ENCODE measurements at regions of chr12 and their contacts with region 1.

Region 1: GRCh38 chr12:107027636-107028053 is 40.7 kb upstream of the MTERF2 start:
- DNase-seq: peak; percentile 12 to 99
- H3K4me3 ChIP-seq: no peak overlapping the region
- H3K27ac ChIP-seq: peak overlapping the region; percentile 69
- H3K4me1 ChIP-seq: peaks cover 51% of the 10 kb centered on the region
- H3K27me3 ChIP-seq: no peaks in the 10 kb centered on the region
- CTCF ChIP-seq: no peak

Region 2: GRCh38 chr12:106841510-106842302 is 185.9 kb before region 1 on chr12:
- CTCF ChIA-PET with region 1: no interaction called
- POLR2A ChIA-PET with region 1: no interaction called
- intact Hi-C with region 1: no loop called
- DNase-seq: peak in 1 of 2 experiments; percentile 14
- H3K4me3 ChIP-seq: no peak overlapping the region
- H3K27ac ChIP-seq: no peak overlapping the region
- H3K4me1 ChIP-seq: peaks cover 16% of the 10 kb centered on the region
- H3K27me3 ChIP-seq: no peaks in the 10 kb centered on the region
- CTCF ChIP-seq: peak; percentile 78

Region 3: GRCh38 chr12:107053709-107054108 is 26.1 kb after region 1 on chr12:
- CTCF ChIA-PET with region 1: no interaction called
- POLR2A ChIA-PET with region 1: no interaction called
- intact Hi-C with region 1: no loop called
- DNase-seq: no peak
- H3K4me3 ChIP-seq: no peak overlapping the region
- H3K27ac ChIP-seq: no peak overlapping the region
- H3K4me1 ChIP-seq: peaks cover 14% of the 10 kb centered on the region
- H3K27me3 ChIP-seq: no peaks in the 10 kb centered on the region
- CTCF ChIP-seq: no peak

Region 4: DNA sequence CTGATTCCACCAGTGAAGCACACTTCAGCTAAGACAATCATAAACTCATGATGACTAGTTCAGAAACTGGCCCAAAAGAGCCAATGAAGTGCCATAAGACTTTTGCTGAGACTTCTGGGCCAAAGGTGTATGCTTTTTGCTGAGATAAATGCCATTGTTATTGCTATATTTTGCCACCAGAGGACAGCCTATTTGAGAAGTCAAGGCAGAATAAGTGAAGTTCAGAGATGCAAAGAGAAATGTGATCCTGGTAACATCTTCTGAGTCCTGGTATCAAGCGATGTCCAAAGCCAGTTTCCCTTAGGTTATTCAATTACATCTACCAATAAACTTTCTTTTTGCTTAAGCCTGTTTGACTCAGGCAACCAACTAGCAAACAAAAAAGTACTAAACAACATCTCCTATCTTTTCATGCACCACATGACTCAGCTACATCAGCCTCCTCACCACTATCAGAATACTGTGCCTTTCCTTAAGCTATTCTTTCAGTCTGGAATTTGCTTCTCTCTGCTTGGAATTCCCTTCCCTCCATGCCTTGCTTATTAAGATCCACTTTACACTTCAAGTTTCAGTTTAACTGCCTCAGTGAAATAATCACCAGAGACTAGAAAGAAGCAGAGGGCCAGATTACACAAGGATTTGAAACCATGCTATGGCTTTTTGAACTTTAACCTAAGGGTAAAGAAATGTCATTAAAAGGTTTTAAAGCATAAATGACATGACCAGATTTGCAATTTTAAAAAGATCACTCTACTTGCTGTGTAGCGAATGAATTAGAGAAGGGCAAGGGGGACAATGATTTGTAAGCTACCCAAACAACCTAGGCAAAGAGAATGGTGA is 51.7 kb after region 1 on chr12:
- CTCF ChIA-PET with region 1: no interaction called
- POLR2A ChIA-PET with region 1: no interaction called
- intact Hi-C with region 1: loop called (anchors 5 kb)
- DNase-seq: peak in 1 of 2 experiments; percentile 52
- H3K4me3 ChIP-seq: no peak overlapping the region
- H3K27ac ChIP-seq: no peak overlapping the region
- H3K4me1 ChIP-seq: peaks cover 6% of the 10 kb centered on the region; the same call in 1 of the 2 replicates
- H3K27me3 ChIP-seq: no peaks in the 10 kb centered on the region
- CTCF ChIP-seq: peak; percentile 62